ENCODE measurements at regions of chr3 and their contacts with region 1.

Region 1: GRCh38 chr3:9402410-9403228 is 5.2 kb downstream of the SETD5 start:
- DNase-seq: no peak
- ATAC-seq: no peak
- H3K4me3 ChIP-seq: no peak overlapping the region
- H3K4me3 Mint-ChIP-seq: peak overlapping the region; percentile 65
- H3K27ac ChIP-seq: no peak overlapping the region
- H3K27ac Mint-ChIP-seq: peak overlapping the region; percentile 65
- H3K4me1 ChIP-seq: peaks cover 30% of the 10 kb centered on the region
- H3K4me1 Mint-ChIP-seq: peaks cover 90% of the 10 kb centered on the region
- H3K27me3 ChIP-seq: no peaks in the 10 kb centered on the region
- H3K27me3 Mint-ChIP-seq: no peaks in the 10 kb centered on the region
- CTCF ChIP-seq: no peak

Region 2: DNA sequence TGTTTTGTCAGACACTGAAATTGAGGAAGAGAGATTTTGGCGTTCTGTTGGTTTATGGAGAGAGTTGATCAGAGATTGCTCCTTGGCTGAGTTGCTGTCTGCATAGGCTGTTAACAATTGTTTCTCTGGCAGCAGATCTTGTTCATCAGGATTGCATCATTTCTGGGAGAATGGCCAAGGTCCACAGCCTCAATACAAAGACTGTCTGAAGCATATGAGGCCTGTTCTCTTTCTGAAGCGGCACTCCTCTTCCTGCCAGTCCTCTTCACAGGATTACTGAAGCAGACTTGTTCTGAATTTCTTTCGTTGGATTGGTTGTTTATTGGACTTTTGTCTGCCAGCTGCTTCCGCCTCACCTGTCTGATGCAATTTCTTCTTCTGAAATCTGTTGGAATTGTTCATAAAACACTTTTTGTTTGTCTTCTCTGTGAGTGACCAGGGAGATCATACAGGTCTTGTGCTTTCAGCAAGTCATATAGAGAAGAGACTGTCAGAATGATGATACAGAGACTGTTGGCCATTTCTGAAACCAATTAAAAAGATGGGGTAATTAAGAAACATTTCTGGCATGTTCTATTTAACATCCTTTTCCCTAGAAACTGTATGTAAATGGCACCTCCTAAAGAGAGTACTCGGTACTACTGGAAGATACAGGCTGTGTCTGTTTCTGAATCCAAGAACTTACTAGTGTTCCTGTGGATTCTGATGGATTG is 20.2 kb after region 1 on chr3:
- CTCF ChIA-PET with region 1: interaction called, 4 read pairs
- POLR2A ChIA-PET with region 1: interaction called, 36 read pairs
- intact Hi-C with region 1: loop called (anchors 1 to 2 kb)
- DNase-seq: peak in 3 of 14 experiments; percentile 55 to 70 (median 64)
- ATAC-seq: peak; percentile 96
- H3K4me3 ChIP-seq: no peak overlapping the region
- H3K4me3 Mint-ChIP-seq: no peak overlapping the region
- H3K27ac ChIP-seq: peak overlapping the region; percentile 3 to 5
- H3K27ac Mint-ChIP-seq: peak overlapping the region; percentile 77
- H3K4me1 ChIP-seq: peaks cover 7% of the 10 kb centered on the region
- H3K4me1 Mint-ChIP-seq: peaks cover 60% of the 10 kb centered on the region
- H3K27me3 ChIP-seq: no peaks in the 10 kb centered on the region
- H3K27me3 Mint-ChIP-seq: no peaks in the 10 kb centered on the region
- CTCF ChIP-seq: peak; percentile 65

Region 3: GRCh38 chr3:9862391-9863057 is 459.9 kb after region 1 on chr3:
- CTCF ChIA-PET with region 1: no interaction called
- POLR2A ChIA-PET with region 1: no interaction called
- intact Hi-C with region 1: no loop called
- DNase-seq: peak in 7 of 14 experiments; percentile 10 to 58 (median 30)
- ATAC-seq: peak; percentile 61
- H3K4me3 ChIP-seq: no peak overlapping the region
- H3K4me3 Mint-ChIP-seq: no peak overlapping the region
- H3K27ac ChIP-seq: no peak overlapping the region
- H3K27ac Mint-ChIP-seq: no peak overlapping the region
- H3K4me1 ChIP-seq: peaks cover 9% of the 10 kb centered on the region
- H3K4me1 Mint-ChIP-seq: no peaks in the 10 kb centered on the region
- H3K27me3 ChIP-seq: peaks cover 11 to 17% of the 10 kb centered on the region in 2 experiments
- H3K27me3 Mint-ChIP-seq: peaks cover 9% of the 10 kb centered on the region
- CTCF ChIP-seq: no peak

Region 4: DNA sequence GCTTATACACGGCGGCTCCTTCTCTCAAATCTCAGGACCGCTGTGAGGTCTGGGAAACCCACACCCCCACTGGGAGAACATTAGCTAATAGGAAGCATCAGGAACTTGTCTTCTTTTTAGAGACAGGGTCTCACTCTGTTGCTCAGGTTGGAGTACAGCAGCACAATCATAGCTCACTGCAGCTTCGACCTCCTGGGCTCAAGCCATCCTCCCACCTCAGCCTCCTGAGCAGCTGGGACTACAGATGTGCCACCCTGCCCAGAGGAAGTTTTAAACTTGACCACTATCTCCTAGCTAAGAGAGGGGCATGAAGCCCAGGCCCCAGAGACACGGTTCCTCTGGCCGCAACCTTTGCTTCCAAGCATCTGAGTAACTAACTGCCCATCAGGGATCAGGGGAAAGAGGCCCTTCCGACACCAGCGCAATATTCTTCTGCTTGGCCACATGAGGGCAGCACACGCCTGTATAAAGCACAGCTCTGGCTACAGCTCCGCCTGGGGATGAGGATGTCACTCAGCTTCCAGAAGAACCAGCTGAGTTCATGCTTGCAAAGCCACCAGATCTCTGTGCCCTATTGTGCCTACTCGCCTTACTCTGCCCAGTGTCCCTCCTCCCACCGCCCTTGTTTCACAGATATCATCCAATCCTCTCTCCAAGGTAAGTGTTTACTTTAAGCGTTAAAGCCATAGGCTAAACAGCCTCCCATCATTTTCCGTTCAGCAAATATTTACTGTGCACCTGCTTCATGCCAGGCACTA is 1355.9 kb after region 1 on chr3:
- CTCF ChIA-PET with region 1: no interaction called
- POLR2A ChIA-PET with region 1: no interaction called
- intact Hi-C with region 1: no loop called
- DNase-seq: peak in 11 of 14 experiments; percentile 11 to 70 (median 33)
- ATAC-seq: peak; percentile 65
- H3K4me3 ChIP-seq: no peak overlapping the region
- H3K4me3 Mint-ChIP-seq: no peak overlapping the region
- H3K27ac ChIP-seq: no peak overlapping the region
- H3K27ac Mint-ChIP-seq: no peak overlapping the region
- H3K4me1 ChIP-seq: no peaks in the 10 kb centered on the region
- H3K4me1 Mint-ChIP-seq: no peaks in the 10 kb centered on the region
- H3K27me3 ChIP-seq: peaks cover 7 to 14% of the 10 kb centered on the region in 2 experiments
- H3K27me3 Mint-ChIP-seq: peaks cover 80% of the 10 kb centered on the region
- CTCF ChIP-seq: peak; percentile 64

Measured in CD4-positive, alpha-beta T cell (primary cell).